ENCODE measurements at regions of chr2 and their contacts with region 1.

Region 1: DNA sequence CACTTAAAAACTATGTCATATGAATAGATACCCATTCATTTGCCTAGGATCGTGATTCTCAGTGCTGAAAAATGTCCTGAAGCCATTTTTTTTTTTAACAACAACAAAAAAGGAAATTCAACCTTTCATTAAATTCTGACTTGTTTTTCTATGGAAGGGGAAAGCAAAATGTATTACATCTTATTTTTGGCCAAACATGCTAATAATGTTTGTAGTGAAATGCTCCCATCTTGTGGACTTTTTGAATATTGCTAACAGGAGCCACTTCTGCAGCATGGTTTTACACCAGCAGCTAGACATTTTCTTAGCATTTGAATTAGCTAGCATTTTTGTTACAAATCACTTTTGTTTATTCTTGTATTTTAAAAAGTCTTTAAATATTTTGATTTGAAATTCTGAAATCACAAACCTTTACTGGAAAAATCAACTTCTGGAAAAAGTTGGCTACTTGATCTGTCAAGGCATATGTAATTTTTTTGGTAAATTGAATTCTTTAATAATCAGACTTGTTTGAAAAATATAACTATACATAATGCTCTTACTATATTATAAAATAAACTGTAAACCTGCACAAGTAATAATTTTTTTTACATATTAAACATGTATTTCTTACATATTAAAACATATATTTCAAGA is 75.8 kb downstream of the KIDINS220 start:
- DNase-seq: peak in 2 of 9 experiments; percentile 36 to 48
- ATAC-seq: no peak
- H3K4me3 ChIP-seq: no peak overlapping the region
- H3K4me3 Mint-ChIP-seq: no peak overlapping the region
- H3K27ac ChIP-seq: no peak overlapping the region
- H3K27ac Mint-ChIP-seq: no peak overlapping the region
- H3K4me1 ChIP-seq: no peaks in the 10 kb centered on the region
- H3K4me1 Mint-ChIP-seq: no peaks in the 10 kb centered on the region
- H3K27me3 ChIP-seq: no peaks in the 10 kb centered on the region
- H3K27me3 Mint-ChIP-seq: no peaks in the 10 kb centered on the region
- CTCF ChIP-seq: peak; percentile 50

Region 2: DNA sequence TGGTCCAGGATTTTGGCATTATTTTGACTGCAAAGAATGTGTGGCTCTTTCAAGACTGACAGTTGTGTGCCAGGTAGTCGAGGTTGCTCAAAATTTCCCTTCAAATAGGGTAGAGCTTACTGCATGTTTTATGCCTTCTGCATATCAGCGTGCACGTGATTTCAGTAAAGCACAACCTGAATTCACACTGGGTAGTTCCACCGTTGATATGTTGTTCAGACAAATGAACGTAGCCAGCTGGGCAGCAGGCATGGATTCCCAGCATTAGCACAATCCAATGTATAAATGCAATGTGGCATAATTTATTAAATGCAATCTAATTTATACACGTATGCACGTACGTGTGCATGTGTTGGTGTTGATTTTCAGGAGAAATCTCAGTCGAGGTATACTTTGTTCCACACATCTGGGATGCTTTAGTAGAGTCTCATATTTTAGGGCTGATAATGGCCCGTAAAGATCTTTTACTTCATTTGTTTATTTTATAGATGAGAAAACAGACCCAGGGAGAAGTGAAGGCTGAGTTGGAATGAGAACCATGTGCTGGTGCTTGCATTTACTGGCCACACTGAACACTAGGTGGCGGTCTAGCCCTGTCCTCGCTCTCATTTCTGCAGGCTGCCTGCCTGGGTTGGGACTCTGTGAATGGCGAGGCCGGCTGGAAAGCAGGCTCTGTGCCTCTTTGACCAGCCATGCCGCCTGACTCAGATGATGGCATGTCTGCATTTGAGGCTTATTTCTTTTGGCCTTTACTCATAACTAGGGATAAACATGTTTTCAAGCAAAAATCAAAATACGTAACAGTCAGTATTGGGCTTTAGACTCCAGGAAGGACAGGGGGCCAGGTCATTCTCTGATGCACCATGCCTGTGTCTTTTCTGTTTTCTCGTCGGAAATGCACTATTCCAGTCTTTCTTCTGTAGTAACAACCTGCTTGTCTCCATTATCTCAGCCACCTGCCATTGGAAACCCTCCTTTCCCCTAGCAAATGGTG is 1724.0 kb before region 1 on chr2:
- CTCF ChIA-PET with region 1: no interaction called
- POLR2A ChIA-PET with region 1: no interaction called
- intact Hi-C with region 1: loop called in 1 of 2 experiments (anchors 5 kb)
- DNase-seq: peak; percentile 29 to 71 (median 56)
- ATAC-seq: peak; percentile 75
- H3K4me3 ChIP-seq: no peak overlapping the region
- H3K4me3 Mint-ChIP-seq: no peak overlapping the region
- H3K27ac ChIP-seq: no peak overlapping the region
- H3K27ac Mint-ChIP-seq: no peak overlapping the region
- H3K4me1 ChIP-seq: no peaks in the 10 kb centered on the region
- H3K4me1 Mint-ChIP-seq: peaks cover 3% of the 10 kb centered on the region
- H3K27me3 ChIP-seq: no peaks in the 10 kb centered on the region
- H3K27me3 Mint-ChIP-seq: no peaks in the 10 kb centered on the region
- CTCF ChIP-seq: peak; percentile 74

Region 3: GRCh38 chr2:7203055-7203467 is 1558.6 kb before region 1 on chr2:
- CTCF ChIA-PET with region 1: no interaction called
- POLR2A ChIA-PET with region 1: no interaction called
- intact Hi-C with region 1: loop called (anchors 1 to 2 kb)
- DNase-seq: peak; percentile 32 to 77 (median 59)
- ATAC-seq: peak; percentile 69
- H3K4me3 ChIP-seq: no peak overlapping the region
- H3K4me3 Mint-ChIP-seq: no peak overlapping the region
- H3K27ac ChIP-seq: no peak overlapping the region
- H3K27ac Mint-ChIP-seq: no peak overlapping the region
- H3K4me1 ChIP-seq: no peaks in the 10 kb centered on the region
- H3K4me1 Mint-ChIP-seq: peaks cover 2% of the 10 kb centered on the region
- H3K27me3 ChIP-seq: no peaks in the 10 kb centered on the region
- H3K27me3 Mint-ChIP-seq: no peaks in the 10 kb centered on the region
- CTCF ChIP-seq: peak; percentile 95